IMR-90 (cell line): ENCODE measurements at regions of chr1 and their contacts with region 1.

Region 1: DNA sequence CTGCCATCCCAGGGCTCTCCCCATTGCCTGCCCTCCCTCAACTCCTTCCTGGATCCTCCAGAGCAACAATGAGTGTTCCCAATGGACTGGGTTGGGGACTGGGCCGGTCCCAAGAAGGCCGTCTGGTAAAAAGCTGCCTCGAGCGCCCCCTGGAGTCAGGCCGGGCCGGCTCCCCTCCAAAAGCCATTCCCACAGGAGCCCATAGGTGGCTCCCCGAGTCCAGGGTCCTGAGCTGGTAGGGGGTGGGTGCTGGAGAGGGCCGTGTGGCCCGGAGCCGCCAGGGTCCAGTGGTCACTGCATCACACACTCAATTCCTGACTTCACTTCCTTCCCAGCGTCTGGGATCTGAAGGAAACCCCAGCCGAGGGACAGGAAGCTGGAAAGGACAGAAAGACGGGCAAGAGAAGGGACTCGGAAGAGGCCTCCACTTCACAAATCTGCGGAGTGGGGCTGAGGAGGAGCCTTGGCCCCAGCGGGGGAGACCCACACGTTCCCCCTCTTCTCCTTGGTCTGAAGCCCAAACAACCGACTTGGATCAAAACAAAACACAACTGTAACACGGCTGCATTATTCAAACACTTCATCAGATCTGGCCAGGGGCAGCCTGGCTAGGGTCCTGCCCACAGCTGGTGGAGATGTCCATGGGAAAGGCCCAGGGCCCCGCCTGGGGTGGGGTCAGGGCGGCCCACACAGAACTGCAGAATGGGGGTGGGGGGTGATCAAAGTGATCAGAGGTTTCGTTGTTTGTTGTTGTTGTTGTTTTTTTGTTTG is 10.9 kb upstream of the ALDH4A1 start:
- DNase-seq: peak; percentile 82
- ATAC-seq: peak; percentile 99
- H3K4me3 ChIP-seq: no peak overlapping the region
- H3K27ac ChIP-seq: peak overlapping the region; percentile 11; the same call in 1 of the 2 replicates
- H3K4me1 ChIP-seq: peaks cover 4% of the 10 kb centered on the region; the same call in 1 of the 2 replicates
- H3K27me3 ChIP-seq: no peaks in the 10 kb centered on the region
- CTCF ChIP-seq: peak; percentile 100; the same call in 1 of the 2 replicates
- POLR2A ChIP-seq: peak; percentile 56; the same call in 1 of the 2 replicates
- RAD21 ChIP-seq: peak; percentile 98

Region 2: DNA sequence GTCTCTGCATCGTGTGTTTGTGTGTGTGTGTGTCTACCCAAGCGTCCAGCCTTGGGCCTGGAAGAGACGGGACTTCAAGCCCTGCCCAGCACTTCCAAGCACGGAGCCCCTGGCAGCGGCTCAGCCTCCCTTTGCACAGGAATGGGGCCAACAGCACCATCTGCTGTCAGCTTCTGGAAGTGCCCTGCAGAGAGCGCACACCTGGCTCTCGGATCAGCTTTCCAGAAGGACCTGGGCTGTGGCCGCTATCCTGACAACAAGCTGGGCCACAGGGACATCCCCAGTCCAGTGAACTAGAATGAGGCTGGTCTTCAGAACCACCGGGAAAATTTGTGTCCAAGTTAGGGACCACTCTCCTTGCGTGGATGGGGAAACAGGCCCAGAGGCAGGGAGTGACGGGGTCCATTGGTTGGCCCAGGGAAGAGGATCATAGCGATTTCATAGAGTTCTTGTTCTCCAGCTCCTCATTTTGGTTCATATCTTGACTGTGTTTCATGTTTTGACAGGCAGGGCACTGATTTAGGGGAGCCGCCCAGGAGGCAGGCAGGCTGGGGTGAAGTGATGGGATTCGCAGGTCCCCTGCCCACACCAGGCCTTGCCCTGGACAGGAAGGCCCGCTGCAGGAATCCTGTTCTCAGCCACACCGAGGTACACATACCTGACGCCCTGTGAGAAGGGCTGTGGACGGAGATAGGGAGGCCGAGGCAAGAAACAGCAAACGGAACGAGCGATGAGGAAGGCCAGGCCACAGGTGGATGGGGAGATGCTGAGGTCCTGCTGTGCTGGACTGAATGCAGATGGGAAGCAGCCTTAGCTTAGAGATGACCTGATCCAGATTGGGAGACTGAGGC is 92.2 kb before region 1 on chr1:
- CTCF ChIA-PET with region 1: no interaction called
- POLR2A ChIA-PET with region 1: no interaction called
- dilution Hi-C with region 1: no loop called
- in situ Hi-C with region 1: no loop called
- intact Hi-C with region 1: no loop called
- DNase-seq: peak; percentile 50
- ATAC-seq: peak; percentile 95
- H3K4me3 ChIP-seq: no peak overlapping the region
- H3K27ac ChIP-seq: no peak overlapping the region
- H3K4me1 ChIP-seq: no peaks in the 10 kb centered on the region
- H3K27me3 ChIP-seq: peaks cover 21% of the 10 kb centered on the region; the same call in 1 of the 2 replicates
- CTCF ChIP-seq: peak; percentile 81
- POLR2A ChIP-seq: no peak
- RAD21 ChIP-seq: peak; percentile 72

Region 3: GRCh38 chr1:18902523-18903290 is 10.5 kb before region 1 on chr1 and contains the start of gene ALDH4A1:
- CTCF ChIA-PET with region 1: interaction called, 14 read pairs
- POLR2A ChIA-PET with region 1: no interaction called
- dilution Hi-C with region 1: no loop called
- in situ Hi-C with region 1: no loop called
- intact Hi-C with region 1: no loop called
- DNase-seq: peak; percentile 98
- ATAC-seq: peak; percentile 97
- H3K4me3 ChIP-seq: peak within 1 kb of the TSS; percentile 81
- H3K27ac ChIP-seq: peak within 1 kb of the TSS; percentile 95
- H3K4me1 ChIP-seq: peaks cover 2% of the 10 kb centered on the region
- H3K27me3 ChIP-seq: no peaks in the 10 kb centered on the region
- CTCF ChIP-seq: no peak
- POLR2A ChIP-seq: no peak
- RAD21 ChIP-seq: no peak
- total RNA-seq, gene ALDH4A1: 8.6 TPM in 2 replicates

Region 4: DNA sequence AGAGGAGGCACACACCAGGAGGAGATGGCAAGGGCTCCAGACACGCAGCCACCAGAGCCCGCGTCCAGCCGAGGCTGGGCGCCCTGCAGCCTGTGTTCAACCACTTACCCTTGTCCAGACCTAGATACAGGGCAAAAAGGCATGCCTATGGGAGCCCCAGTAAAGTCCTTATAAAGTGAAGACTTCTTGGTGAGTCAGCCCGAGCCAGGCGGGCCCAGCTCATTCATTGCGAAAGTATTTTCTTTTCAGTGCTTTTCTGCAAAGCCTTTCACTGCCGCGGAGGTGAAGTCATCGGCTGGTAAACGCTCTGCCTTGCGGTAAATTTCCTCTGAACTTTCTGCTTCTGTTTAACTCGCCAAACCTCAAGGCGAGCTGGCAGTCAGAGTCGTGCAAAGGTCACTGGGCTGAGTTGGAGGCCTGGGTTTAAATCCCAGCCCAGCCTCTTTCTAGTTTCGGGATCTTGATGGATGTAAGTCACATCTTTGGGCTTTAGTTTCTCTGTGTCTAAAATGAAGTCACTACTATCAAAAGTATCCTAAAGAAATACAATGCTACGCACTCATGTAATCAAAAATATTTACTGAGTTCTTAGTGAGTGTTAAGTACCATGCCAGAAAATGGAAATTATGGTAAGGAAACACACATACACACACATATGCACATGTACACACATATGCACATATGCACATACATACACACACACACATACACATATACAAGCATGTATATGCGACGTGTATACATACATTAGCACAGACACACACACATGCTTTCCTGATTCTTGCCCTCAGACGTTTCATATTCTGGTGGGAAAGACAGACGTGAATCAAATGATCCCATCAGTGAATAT is 98.0 kb after region 1 on chr1:
- CTCF ChIA-PET with region 1: interaction called, 6 read pairs
- POLR2A ChIA-PET with region 1: no interaction called
- dilution Hi-C with region 1: no loop called
- in situ Hi-C with region 1: no loop called
- intact Hi-C with region 1: loop called (anchors 5 kb)
- DNase-seq: peak; percentile 97
- ATAC-seq: peak; percentile 91
- H3K4me3 ChIP-seq: no peak overlapping the region
- H3K27ac ChIP-seq: peak overlapping the region; percentile 86
- H3K4me1 ChIP-seq: peaks cover 26% of the 10 kb centered on the region
- H3K27me3 ChIP-seq: no peaks in the 10 kb centered on the region
- CTCF ChIP-seq: no peak
- POLR2A ChIP-seq: peak; percentile 61; the same call in 1 of the 2 replicates
- RAD21 ChIP-seq: peak; percentile 12

Region 5: DNA sequence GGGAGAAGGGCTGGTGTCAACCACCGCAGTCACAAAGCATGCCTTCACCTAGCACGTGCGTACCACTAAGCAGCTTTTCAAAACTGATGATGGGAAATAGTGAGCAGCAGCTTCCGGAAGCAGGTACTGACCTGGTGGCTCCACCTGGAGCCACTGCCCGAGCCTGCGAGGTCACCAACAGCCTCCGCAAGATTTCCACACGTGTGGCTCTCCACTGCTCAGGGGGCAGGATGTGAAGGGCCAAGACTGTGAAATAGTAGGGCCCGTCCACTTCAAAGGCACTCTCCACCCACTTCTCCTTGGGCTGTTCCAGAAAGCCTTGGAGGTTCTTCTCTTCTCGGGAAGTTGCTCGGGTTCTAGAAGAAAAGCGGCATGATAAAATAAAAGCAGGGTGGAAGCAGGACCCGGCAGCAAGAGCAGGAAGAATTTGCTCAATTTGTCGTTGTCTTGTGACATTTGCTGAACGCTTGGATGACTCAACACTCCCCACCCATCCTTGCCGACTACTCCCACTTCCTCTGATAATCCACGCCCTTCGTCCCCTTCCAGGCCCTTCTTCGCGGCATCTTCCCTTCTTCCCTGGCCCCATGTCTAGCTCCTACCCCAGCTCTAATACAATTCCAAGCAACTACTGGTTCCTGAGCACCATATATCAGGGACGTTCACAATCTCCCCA is 168.1 kb after region 1 on chr1:
- CTCF ChIA-PET with region 1: interaction called, 7 read pairs
- POLR2A ChIA-PET with region 1: no interaction called
- dilution Hi-C with region 1: no loop called
- in situ Hi-C with region 1: loop called (anchors 5 kb)
- intact Hi-C with region 1: no loop called
- DNase-seq: peak; percentile 50
- ATAC-seq: peak; percentile 43
- H3K4me3 ChIP-seq: no peak overlapping the region
- H3K27ac ChIP-seq: 0 out of 2 replicates have a peak overlapping the region, but pooled peaks have one; percentile 16
- H3K4me1 ChIP-seq: peaks cover 4% of the 10 kb centered on the region; the same call in 1 of the 2 replicates
- H3K27me3 ChIP-seq: no peaks in the 10 kb centered on the region
- CTCF ChIP-seq: no peak
- POLR2A ChIP-seq: no peak
- RAD21 ChIP-seq: no peak

Region 6: DNA sequence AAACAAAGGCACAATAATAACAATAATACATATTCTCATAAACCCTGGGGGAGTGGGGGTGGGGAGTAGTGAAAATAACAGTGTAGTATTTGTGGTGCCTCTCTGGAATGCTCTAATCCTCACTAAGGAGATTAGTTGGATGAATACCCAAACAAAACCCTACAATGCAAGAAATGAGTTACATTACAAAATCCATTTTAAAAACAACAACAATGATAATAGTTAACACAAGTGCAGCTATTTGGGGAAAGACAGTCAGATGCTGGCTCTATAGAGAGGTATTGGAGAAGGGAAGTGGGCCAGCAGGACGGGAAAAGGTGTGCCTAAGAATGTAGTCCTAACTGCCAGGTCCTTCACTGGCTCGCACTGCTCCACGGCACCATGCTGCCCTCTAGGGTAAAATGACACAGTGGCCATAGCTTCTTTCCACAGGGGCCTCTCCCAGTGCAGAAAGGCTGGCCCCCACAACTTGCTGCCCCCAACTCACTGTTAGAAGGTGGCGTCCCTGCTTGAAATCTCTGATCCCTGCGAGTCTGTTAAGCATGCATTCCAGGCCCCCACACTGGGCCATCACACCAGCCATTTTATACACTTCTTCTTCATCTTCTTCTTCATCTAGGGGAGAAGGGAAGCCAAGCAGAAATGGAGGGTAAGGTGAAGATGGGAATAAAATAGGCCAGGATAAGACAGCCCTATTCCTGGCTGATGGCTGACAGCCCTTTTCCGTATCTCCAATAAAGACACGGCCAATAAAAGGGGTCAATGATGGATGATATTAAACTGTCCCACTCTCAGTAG is 183.0 kb after region 1 on chr1:
- CTCF ChIA-PET with region 1: interaction called, 10 read pairs
- POLR2A ChIA-PET with region 1: no interaction called
- dilution Hi-C with region 1: no loop called
- in situ Hi-C with region 1: no loop called
- intact Hi-C with region 1: loop called (anchors 1 kb)
- DNase-seq: peak; percentile 7
- ATAC-seq: peak; percentile 24; the same call in 1 of the 2 replicates
- H3K4me3 ChIP-seq: no peak overlapping the region
- H3K27ac ChIP-seq: no peak overlapping the region
- H3K4me1 ChIP-seq: peaks cover 9% of the 10 kb centered on the region
- H3K27me3 ChIP-seq: no peaks in the 10 kb centered on the region
- CTCF ChIP-seq: peak; percentile 34
- POLR2A ChIP-seq: no peak
- RAD21 ChIP-seq: peak; percentile 55